Motor neuron (in vitro differentiated cells): ENCODE measurements at regions of chr19 and their contacts with region 1.

Region 1: GRCh38 chr19:41959056-41960053 is at the start of gene RABAC1:
- ATAC-seq: peak; percentile 72 to 87 (median 84)
- H3K4me3 ChIP-seq: peak within 1 kb of the TSS; percentile 71 to 98 (median 92)
- H3K27ac ChIP-seq: peak within 1 kb of the TSS; percentile 92 to 96
- H3K4me1 ChIP-seq: peaks cover 5 to 10% of the 10 kb centered on the region in 2 donors
- total RNA-seq, gene RABAC1: 77.0 to 267 (median 181) TPM

Region 2: DNA sequence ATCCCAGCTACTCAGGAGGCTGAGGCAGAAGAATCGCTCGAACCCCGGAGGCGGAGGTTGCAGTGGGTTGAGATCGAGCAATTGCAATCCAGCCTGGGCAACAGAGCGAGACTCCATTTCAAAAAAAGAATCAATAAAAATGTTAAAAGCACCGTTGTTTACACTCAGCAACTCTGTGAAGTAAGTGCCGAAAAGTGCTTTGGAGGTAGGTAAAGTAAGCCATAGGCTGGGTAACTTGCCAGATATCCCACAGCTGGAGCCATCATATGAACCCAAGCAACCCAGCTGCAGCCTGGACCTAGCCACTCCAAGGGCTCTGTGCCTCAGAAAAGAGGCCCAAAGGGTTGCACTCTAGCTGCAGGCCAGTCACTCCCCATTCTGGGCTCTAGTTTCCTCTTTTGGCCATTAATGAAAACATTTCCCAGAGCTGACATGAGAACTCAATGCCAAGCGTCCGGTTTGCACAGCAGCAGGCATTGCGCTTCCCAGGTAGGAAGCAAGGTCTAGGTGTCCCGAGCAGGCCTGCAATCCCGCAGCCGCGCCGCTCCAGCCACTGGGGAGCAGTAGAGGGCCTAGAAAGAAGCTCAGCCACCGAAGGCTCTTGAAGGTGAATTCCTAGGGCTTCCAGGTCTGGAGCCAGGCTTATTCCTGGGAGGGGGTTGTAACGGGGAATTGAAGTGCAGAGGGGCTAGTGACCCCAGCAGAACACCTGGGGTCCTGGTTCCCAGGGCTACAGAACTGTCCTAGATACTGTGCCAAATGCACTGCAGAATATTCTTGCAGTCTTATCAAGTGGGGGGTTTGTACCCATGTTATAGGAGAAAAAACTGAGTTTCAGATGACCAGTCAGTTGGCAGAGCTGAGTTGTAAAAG is 86.3 kb before region 1 on chr19:
- in situ Hi-C with region 1: loop called in 1 of 9 experiments (anchors 10 kb)
- ATAC-seq: peak; percentile 37 to 69 (median 52)
- H3K4me3 ChIP-seq: no peak overlapping the region
- H3K27ac ChIP-seq: no peak overlapping the region
- H3K4me1 ChIP-seq: no peaks in the 10 kb centered on the region

Region 3: DNA sequence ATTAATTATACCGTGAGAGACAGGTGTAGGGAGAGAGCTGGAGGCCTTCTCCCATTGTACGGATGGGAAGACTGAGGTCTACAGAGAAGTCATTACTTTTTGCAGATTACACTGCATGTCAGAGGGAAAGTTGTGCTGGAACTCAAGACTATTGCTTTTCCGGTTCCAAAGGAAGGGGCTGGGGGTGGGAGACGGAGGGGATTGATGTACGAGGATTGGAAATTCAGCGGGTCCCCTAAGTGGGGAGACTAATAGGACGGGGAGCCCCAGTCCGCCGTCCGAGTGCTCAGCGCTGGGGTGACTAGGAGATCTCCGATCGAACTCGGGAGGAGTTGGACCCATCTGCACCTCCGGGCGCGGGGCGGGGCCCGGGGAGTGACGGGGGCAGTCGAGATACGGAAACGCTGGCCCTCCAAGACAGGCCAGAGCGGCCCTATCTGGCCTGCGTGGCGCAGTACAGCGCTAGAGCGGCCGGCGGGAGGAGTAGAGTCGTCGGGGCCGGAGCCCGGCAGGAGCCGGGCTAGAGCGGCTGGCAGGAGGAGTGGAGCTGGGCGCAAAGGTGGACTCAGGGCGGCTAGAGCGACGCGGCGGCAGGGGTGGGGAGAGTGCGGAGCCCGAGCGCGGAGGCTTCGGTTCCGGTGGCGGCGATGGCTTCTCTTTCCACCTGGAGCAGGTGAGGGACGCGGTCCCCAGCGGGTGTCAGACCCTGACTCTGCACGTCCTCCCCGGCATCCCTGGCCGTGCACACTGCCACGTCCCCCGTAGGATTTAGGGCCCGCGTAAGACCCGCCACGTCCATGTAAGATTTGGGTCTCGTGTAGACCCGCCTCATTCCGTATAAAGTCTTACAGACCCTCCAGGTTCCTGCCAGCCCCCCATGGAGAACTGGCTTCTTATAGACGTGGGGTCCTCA is 75.3 kb before region 1 on chr19:
- in situ Hi-C with region 1: loop called in 2 of 9 experiments (anchors 10 kb)
- ATAC-seq: peak; percentile 86 to 98 (median 98)
- H3K4me3 ChIP-seq: peak overlapping the region; percentile 54 to 91 (median 79)
- H3K27ac ChIP-seq: peak overlapping the region in 1 of 2 donors; percentile 73
- H3K4me1 ChIP-seq: peaks cover 9 to 12% of the 10 kb centered on the region in 2 donors